ENCODE measurements at regions of chr7 and their contacts with region 1.

Region 1: DNA sequence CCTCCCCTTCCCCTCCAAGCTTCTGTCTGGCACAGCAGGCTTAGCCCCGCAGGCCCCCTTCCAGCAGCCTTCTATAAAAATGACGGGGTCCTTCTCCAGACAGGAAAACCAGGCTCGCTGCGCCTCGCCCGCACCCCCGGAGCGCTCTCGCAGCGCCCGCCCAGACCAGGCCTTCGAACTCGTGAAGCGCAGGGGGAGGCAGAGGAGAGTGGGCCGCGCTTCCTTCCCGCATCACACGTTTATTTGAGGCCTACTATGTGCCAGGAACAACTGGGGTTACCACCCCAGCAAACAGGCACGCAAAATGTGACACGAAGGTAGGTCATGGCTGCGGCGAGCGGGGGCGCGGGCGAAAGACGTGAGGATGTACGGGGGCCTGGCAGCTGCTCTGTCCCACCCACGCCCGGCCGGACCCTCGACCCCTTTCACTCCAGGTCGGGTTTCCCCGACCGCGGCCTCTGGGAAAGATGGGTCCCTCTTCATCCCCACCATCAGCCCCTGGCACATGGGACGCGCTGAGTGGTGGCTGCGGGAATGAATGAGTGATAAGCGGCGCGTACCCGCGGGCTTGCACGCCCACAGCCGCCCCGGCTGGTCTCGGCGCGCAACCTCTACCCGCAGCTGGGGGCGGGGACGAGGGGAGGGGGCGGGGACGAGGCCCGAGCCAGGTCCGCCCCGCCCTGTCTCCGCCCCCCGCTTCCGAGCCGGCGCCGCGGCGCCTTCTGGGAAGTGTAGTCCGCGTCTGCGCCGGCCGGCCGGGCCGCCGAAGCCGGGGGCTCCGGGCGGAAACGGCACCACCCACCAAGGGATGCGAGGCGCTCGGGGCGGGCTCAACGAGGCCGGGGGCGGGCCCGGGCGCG is 59.1 kb downstream of the ZNF467 start:
- DNase-seq: peak; percentile 80 to 90 (median 82)
- H3K4me3 ChIP-seq: peak overlapping the region; percentile 60 to 72
- H3K4me3 Mint-ChIP-seq: peak overlapping the region; percentile 76 to 87 (median 83)
- H3K27ac ChIP-seq: peak overlapping the region; percentile 62
- H3K27ac Mint-ChIP-seq: peak overlapping the region in 5 of 7 donors; percentile 35 to 85 (median 64)
- H3K4me1 ChIP-seq: peaks cover 23% of the 10 kb centered on the region
- H3K4me1 Mint-ChIP-seq: peaks cover 16 to 31% (median 18%) of the 10 kb centered on the region in 4 donors
- H3K27me3 ChIP-seq: no peaks in the 10 kb centered on the region
- H3K27me3 Mint-ChIP-seq: no peaks in the 10 kb centered on the region

Region 2: DNA sequence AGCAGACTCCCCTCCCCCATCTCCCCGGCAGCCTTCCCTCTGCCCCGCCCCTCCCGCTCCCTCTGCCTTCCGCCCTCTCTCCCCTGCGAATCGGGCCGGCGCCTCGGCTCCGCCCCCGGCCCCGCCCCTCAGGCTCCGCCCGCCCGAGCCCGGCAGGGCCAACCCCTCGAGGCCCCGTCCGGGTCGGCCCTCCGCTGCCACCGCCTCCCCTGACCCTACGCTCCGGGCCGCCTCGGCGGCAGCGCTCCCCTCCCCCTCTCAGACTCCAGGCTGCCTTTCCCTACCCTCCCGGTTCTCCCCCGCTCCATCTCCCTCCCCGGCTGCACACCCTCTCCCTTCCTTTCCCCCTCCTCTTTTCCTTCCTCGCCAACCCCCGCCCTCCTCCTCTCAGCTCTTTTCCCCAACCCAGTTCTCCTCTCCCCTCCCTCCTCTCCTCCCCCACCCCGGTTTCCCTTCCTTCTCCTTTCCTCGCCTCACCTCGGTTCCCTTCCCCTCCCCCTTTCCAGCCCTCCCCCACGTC is 57.5 kb after region 1 on chr7:
- CTCF ChIA-PET with region 1: no interaction called
- POLR2A ChIA-PET with region 1: no interaction called
- intact Hi-C with region 1: loop called (anchors 1 kb)
- DNase-seq: peak; percentile 83 to 85 (median 84)
- H3K4me3 ChIP-seq: peak overlapping the region; percentile 52 to 60
- H3K4me3 Mint-ChIP-seq: peak overlapping the region; percentile 72 to 84 (median 77)
- H3K27ac ChIP-seq: peak overlapping the region; percentile 35
- H3K27ac Mint-ChIP-seq: peak overlapping the region in 2 of 7 donors; percentile 42 to 56
- H3K4me1 ChIP-seq: peaks cover 15% of the 10 kb centered on the region
- H3K4me1 Mint-ChIP-seq: peaks cover 3 to 17% (median 6%) of the 10 kb centered on the region in 4 donors
- H3K27me3 ChIP-seq: no peaks in the 10 kb centered on the region
- H3K27me3 Mint-ChIP-seq: peaks cover 0 to 3% of the 10 kb centered on the region in 2 donors

Region 3: DNA sequence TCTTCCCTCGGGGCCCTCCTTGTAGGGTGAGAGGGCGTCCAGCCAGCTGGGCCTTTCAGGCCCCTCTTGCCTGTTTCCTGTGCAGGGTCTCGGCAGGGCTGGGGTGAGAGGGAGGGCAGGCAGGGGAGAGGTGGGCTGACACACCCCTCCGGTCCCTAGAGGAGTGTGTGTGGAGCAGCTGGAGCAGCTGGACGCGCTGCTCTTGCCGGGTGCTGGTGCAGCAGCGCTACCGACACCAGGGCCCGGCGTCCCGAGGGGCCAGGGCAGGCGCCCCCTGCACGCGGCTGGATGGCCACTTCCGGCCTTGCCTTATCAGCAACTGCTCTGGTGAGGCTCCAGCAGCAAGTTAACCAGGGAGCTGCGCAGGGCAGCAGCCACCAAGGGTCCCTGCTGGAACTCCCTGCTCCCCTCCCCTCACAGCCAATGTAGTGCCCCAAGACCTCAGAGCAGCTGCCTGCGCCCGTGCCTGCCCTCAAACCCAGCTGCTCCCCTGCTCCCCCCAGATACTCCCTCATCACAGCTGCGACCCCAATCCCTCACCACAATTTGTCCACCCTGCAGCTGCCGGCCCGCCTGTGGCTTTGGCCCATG is 108.2 kb after region 1 on chr7:
- CTCF ChIA-PET with region 1: no interaction called
- POLR2A ChIA-PET with region 1: no interaction called
- intact Hi-C with region 1: no loop called
- DNase-seq: no peak
- H3K4me3 ChIP-seq: no peak overlapping the region
- H3K4me3 Mint-ChIP-seq: no peak overlapping the region
- H3K27ac ChIP-seq: no peak overlapping the region
- H3K27ac Mint-ChIP-seq: no peak overlapping the region
- H3K4me1 ChIP-seq: no peaks in the 10 kb centered on the region
- H3K4me1 Mint-ChIP-seq: peaks cover 0 to 2% (median 0%) of the 10 kb centered on the region in 4 donors
- H3K27me3 ChIP-seq: no peaks in the 10 kb centered on the region
- H3K27me3 Mint-ChIP-seq: no peaks in the 10 kb centered on the region

Measured in CD4-positive, alpha-beta memory T cell (primary cell).